ENCODE measurements at regions of chr11 and their contacts with region 1.

Region 1: DNA sequence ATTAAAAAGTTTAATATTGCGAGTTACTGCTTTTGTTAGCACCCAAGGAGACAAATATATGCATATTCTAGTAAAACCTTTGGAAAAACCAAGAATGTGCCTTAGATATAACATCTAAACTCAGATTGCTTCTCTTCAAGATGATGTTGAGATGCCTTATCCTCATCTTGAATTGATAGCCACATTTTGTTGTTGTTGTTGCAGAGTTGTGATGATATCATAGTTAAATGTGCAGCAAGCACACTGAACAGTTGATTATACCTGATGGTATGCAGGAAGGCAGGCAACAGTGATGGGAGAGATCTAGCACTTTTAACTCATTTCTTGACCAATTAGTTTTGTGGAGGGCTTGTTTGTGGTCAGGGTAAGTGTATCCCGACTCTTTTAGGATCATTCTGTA is 48.0 kb downstream of the KDM2A start:
- DNase-seq: no peak
- H3K4me3 Mint-ChIP-seq: no peak overlapping the region
- H3K27ac Mint-ChIP-seq: no peak overlapping the region
- H3K4me1 Mint-ChIP-seq: no peaks in the 10 kb centered on the region
- H3K27me3 Mint-ChIP-seq: no peaks in the 10 kb centered on the region
- CTCF ChIP-seq: no peak

Region 2: DNA sequence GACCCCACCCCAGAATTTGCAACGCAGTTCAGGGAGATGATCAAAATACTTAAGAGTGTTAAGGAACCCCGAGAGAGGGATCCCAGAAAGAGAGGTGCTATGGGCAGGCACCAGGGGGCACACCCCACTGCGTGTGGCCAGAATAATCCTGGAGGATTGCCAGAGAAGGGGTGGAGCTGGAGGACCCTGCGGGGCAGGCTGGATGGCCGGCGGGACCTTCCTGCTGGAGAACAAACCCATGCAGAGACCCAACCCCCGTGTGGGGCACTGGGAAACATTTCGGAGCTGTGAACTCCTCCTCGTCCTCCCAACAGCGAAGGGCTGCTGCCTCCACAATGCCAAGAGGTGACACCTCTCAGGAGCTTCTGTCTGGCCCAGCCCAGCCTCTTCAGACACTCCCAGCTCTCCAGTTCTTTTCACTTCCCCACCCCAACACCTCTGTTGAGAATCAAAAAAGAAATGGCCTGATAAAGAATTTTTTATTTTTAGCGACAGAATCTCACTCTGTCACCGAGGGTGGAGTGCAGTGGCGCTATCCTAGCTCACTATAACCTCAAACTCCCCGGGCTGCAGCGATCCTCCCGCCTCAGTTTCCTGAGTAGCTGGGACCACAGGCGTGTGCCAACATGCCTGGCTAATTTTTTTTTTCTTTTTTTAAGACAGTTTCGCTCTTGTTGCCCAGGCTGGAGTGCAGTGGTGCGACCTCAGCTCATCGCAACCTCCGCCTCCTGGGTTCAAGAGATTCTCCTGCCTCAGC is 84.9 kb before region 1 on chr11:
- CTCF ChIA-PET with region 1: no interaction called
- intact Hi-C with region 1: loop called (anchors 5 kb)
- DNase-seq: peak; percentile 49
- H3K4me3 Mint-ChIP-seq: no peak overlapping the region
- H3K27ac Mint-ChIP-seq: no peak overlapping the region
- H3K4me1 Mint-ChIP-seq: peaks cover 16% of the 10 kb centered on the region
- H3K27me3 Mint-ChIP-seq: no peaks in the 10 kb centered on the region
- CTCF ChIP-seq: no peak

Region 3: DNA sequence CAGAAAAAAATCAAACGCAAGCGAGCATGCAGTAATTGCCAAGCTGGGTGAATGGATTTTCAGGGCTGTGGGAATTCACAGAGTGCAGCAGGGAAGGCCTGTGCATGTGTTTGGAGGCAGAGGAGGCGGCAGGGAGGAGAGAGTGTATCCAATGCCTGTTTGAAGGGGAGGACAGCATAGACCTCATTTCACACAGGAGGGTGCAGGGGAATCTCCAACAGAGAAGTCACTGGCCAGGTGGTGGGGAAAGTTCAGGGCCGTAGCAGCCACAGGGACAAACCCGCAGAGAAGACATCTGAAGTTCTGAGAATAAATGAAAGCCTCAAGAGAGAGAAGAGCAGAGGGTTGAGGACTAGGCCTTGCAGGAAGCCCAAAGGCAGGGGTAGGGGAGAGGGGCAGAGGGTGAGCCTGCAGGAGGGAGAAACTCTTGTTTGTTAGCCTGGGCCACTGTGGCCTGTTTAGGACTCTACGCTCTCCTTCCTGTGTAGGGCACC is 67.2 kb before region 1 on chr11:
- CTCF ChIA-PET with region 1: interaction called, 5 read pairs
- intact Hi-C with region 1: loop called (anchors 5 kb)
- DNase-seq: no peak
- H3K4me3 Mint-ChIP-seq: no peak overlapping the region
- H3K27ac Mint-ChIP-seq: no peak overlapping the region
- H3K4me1 Mint-ChIP-seq: no peaks in the 10 kb centered on the region
- H3K27me3 Mint-ChIP-seq: no peaks in the 10 kb centered on the region
- CTCF ChIP-seq: no peak

Measured in Calu3 (cell line).